ENCODE measurements at regions of chr12 and their contacts with region 1.

Region 1: DNA sequence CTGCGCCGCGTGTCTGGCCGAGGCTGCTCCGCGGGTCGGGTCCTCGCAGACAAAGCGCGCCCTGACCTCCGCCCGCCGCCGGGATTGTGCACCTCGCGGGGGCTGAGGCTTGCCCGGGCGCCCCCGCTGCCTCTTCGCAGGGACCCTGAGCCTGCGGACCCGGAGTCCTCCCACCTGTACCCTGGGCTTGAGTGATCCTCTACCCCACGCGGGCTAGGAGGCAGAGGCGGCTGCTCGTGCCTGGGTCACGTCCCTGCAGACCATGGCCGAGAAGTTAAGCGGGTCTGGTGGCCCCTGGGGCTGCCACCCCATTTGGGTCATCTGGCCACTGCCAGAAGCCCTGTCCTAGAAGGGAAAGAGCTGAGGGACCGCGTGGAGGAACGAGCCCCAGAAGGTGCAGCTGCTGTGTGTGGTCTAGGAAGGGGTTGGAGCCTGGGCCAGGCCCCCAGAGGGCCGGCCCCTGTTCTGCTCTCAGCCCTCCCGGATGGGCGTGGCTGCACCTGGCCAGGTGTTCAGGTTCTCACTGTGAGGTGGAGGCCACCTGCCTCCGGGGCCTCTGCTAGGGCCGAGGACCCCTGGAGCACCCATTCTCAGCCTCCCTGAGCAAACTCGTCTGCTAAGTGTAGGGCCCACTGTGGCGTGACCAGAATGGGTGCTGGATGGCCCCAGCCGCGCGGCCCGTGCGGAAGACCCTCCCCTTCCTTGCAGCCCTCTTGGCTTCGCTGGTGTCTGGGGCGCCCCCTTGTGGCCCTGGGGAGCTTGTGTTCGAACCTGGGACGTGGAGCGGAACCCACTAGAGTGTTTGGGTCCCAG is 49.6 kb downstream of the LRCOL1 start:
- DNase-seq: peak; percentile 63
- H3K4me3 ChIP-seq: peak overlapping the region; percentile 79 to 91 (median 81)
- H3K27ac ChIP-seq: peak overlapping the region; percentile 41
- H3K4me1 ChIP-seq: peaks cover 5% of the 10 kb centered on the region
- H3K27me3 ChIP-seq: no peaks in the 10 kb centered on the region
- CTCF ChIP-seq: peak; percentile 86 to 96
- POLR2A ChIP-seq: peak; percentile 42

Region 2: DNA sequence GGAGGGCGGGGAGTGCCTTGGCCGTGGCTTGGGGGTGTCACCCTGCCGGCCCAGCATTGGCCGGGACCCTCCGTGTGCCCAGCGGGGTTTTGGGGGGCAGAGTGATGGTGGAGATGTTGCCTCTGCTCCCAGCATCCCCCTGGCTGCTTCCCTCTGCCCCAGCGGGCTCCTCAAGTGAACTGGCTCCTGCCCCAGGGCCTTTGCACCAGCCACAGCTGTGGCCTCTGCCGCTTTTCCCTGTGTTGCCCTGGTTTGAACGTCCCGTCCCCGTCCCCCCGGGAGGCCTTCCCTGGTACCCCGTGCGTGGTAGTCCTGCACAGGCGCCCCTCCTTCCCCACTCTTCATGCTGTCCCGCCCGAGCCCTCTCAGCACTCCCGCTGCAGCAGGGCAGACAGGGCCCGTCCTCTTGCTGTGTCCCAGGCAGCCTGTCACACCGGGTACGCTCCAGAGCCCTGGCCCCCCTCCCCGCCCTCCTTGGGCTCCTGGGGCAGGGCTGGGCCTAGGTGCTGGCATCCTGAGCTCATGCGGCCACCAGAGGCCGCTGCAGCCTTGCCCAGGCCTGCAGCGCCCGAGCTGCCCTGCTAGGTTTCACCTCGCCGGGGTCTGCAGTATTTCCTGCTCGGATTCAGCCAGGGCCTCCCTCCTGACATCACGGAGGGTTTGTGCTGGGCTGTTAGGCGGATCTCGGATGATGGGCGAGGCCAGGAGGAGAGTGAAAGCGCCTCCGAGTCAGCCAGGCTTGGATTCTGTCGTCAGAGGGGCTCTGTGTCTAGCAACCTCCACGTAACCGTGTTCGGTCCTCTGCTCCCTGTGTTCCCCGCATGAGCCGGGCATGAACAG is 407.1 kb before region 1 on chr12:
- CTCF ChIA-PET with region 1: interaction called, 14 read pairs
- POLR2A ChIA-PET with region 1: no interaction called
- dilution Hi-C with region 1: no loop called
- intact Hi-C with region 1: loop called (anchors 1 kb)
- DNase-seq: peak; percentile 53
- H3K4me3 ChIP-seq: no peak overlapping the region
- H3K27ac ChIP-seq: no peak overlapping the region
- H3K4me1 ChIP-seq: no peaks in the 10 kb centered on the region
- H3K27me3 ChIP-seq: no peaks in the 10 kb centered on the region
- CTCF ChIP-seq: peak; percentile 89 to 98
- POLR2A ChIP-seq: no peak

Region 3: DNA sequence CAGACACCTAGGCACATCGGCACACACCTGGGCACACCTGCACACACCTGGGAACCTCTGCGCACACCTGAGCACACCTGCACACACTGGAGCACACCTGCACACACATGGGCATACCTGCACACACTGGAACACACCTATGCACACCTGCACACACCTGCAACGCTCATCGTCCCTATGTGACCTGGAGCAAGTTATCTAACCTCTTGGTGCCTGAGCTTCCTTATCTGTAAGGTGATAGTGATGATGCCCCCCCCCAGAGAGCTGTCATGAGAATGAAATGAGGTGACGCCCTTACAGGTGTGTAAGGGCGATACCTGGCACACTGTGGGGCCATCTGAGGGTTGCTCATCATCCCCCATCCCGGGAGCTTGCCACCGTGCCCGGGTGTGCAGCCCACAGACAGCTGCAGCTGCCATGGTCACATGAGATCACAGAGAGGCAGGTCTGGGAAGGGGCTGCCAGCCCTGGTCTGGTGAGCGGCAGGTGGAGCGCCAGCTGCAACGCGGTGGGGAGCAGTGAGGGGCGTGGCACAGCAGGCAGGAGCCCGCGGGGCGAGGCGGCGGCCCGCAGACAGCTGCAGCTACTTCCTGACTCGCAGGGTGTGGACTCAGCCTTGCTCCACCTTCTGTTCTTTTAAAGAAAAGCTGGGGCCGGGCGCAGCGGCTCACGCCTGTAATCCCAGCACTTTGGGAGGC is 130.7 kb before region 1 on chr12:
- CTCF ChIA-PET with region 1: interaction called, 5 read pairs
- POLR2A ChIA-PET with region 1: no interaction called
- dilution Hi-C with region 1: no loop called
- intact Hi-C with region 1: loop called (anchors 1 kb)
- DNase-seq: no peak
- H3K4me3 ChIP-seq: no peak overlapping the region
- H3K27ac ChIP-seq: no peak overlapping the region
- H3K4me1 ChIP-seq: no peaks in the 10 kb centered on the region
- H3K27me3 ChIP-seq: peaks cover 0 to 1% of the 10 kb centered on the region in 2 experiments
- CTCF ChIP-seq: no peak
- POLR2A ChIP-seq: no peak

Region 4: DNA sequence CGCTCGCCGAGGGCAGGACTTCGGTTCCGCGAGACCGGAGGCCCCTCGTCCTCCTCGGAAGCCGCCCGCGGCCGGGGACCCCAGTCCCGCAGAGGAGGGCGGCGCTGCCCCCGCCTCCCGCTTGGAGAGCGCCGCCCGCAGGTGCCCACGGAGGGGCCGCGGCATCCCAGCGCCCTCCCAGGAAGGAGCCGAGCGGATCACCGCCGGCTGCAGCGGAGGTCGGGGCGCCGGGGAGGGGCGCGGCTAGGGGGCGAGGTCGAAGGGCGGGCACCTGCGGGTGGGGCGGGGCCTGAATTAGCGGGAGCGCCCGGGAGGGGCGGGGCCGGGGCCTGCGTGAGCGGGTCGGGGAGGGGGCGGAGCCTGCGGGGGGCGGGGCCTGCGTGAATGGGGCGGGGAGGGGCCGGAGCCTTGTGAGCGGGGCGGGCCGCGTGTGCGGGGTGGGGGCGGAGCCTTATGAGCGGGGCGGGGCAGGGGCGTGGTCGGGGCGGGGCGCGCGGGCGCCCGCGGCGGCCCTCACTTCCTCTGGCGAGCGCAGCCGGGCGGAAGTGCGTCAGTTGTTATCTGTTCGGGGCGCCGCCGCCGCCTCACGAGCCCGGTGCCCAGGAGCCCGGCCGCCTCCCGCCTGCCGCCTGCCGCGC is 71.1 kb before region 1 on chr12 and contains the start of gene FBRSL1:
- CTCF ChIA-PET with region 1: no interaction called
- POLR2A ChIA-PET with region 1: no interaction called
- dilution Hi-C with region 1: no loop called
- intact Hi-C with region 1: loop called (anchors 2 kb)
- DNase-seq: peak; percentile 76
- H3K4me3 ChIP-seq: peak within 1 kb of the TSS; percentile 58 to 69 (median 67)
- H3K27ac ChIP-seq: no peak within 1 kb of the TSS
- H3K4me1 ChIP-seq: peaks cover 15% of the 10 kb centered on the region
- H3K27me3 ChIP-seq: no peaks in the 10 kb centered on the region
- CTCF ChIP-seq: no peak
- POLR2A ChIP-seq: no peak
- total RNA-seq, gene FBRSL1: 75.5 and 79.8 TPM in 2 replicates

Region 5: GRCh38 chr12:132506328-132507160 is 54.3 kb before region 1 on chr12:
- CTCF ChIA-PET with region 1: interaction called, 15 read pairs
- POLR2A ChIA-PET with region 1: no interaction called
- dilution Hi-C with region 1: no loop called
- intact Hi-C with region 1: no loop called
- DNase-seq: peak; percentile 85
- H3K4me3 ChIP-seq: no peak overlapping the region
- H3K27ac ChIP-seq: peak overlapping the region; percentile 48
- H3K4me1 ChIP-seq: peaks cover 16% of the 10 kb centered on the region
- H3K27me3 ChIP-seq: peaks cover 0 to 10% of the 10 kb centered on the region in 2 experiments
- CTCF ChIP-seq: no peak
- POLR2A ChIP-seq: no peak

Region 6: GRCh38 chr12:132620995-132621886 is 60.4 kb after region 1 on chr12:
- CTCF ChIA-PET with region 1: no interaction called
- POLR2A ChIA-PET with region 1: no interaction called
- dilution Hi-C with region 1: no loop called
- intact Hi-C with region 1: no loop called
- DNase-seq: no peak
- H3K4me3 ChIP-seq: no peak overlapping the region
- H3K27ac ChIP-seq: no peak overlapping the region
- H3K4me1 ChIP-seq: no peaks in the 10 kb centered on the region
- H3K27me3 ChIP-seq: peaks cover 18 to 25% of the 10 kb centered on the region in 2 experiments
- CTCF ChIP-seq: no peak
- POLR2A ChIP-seq: no peak